IMR-90 (cell line): ENCODE measurements at regions of chr5 and their contacts with region 1.

Region 1: GRCh38 chr5:112737463-112738190 is at the start of gene APC:
- DNase-seq: peak; percentile 87
- ATAC-seq: peak; percentile 95
- H3K4me3 ChIP-seq: peak within 1 kb of the TSS; percentile 97
- H3K27ac ChIP-seq: peak within 1 kb of the TSS; percentile 87
- H3K4me1 ChIP-seq: peaks cover 10% of the 10 kb centered on the region
- H3K27me3 ChIP-seq: no peaks in the 10 kb centered on the region
- CTCF ChIP-seq: no peak
- POLR2A ChIP-seq: 0 out of 2 replicates have a peak, but pooled peaks have one; percentile 22
- RAD21 ChIP-seq: no peak
- total RNA-seq, gene APC: 58.4 and 76.1 TPM in 2 replicates

Region 2: GRCh38 chr5:112707187-112708102 is 30.2 kb before region 1 on chr5:
- CTCF ChIA-PET with region 1: no interaction called
- POLR2A ChIA-PET with region 1: no interaction called
- dilution Hi-C with region 1: no loop called
- in situ Hi-C with region 1: no loop called
- intact Hi-C with region 1: loop called (anchors 5 kb)
- DNase-seq: peak; percentile 98
- ATAC-seq: peak; percentile 96
- H3K4me3 ChIP-seq: peak overlapping the region; percentile 87
- H3K27ac ChIP-seq: peak overlapping the region; percentile 94
- H3K4me1 ChIP-seq: peaks cover 4% of the 10 kb centered on the region; the same call in 1 of the 2 replicates
- H3K27me3 ChIP-seq: no peaks in the 10 kb centered on the region
- CTCF ChIP-seq: no peak
- POLR2A ChIP-seq: peak; percentile 67; the same call in 1 of the 2 replicates
- RAD21 ChIP-seq: no peak

Region 3: GRCh38 chr5:112779531-112779930 is 41.9 kb after region 1 on chr5:
- CTCF ChIA-PET with region 1: no interaction called
- POLR2A ChIA-PET with region 1: interaction called, 15 read pairs
- dilution Hi-C with region 1: no loop called
- in situ Hi-C with region 1: no loop called
- intact Hi-C with region 1: no loop called
- DNase-seq: peak; percentile 84
- ATAC-seq: peak; percentile 43
- H3K4me3 ChIP-seq: no peak overlapping the region
- H3K27ac ChIP-seq: no peak overlapping the region
- H3K4me1 ChIP-seq: 0 out of 2 replicates have a peak, but pooled peaks cover 2% of the 10 kb centered on the region
- H3K27me3 ChIP-seq: no peaks in the 10 kb centered on the region
- CTCF ChIP-seq: no peak
- POLR2A ChIP-seq: no peak
- RAD21 ChIP-seq: no peak

Region 4: DNA sequence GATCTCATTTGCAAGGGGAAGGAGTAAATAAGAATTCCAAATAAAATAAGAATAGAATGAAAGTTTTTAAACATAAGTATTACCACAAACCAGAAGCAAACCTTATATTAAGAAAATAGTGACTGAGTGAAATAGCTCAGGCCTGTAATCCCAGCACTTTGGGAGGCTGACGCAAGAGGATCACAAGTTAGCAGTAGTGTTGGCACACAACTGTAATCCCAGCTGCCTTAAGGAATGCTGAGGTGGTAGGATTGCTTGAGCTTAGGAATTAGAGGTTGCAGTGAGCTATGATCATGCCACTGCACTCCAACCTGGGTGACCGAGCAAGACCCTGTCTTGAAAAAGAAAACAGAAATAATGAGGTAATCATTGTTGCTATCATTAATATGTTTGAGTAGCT is 47.1 kb after region 1 on chr5:
- CTCF ChIA-PET with region 1: no interaction called
- POLR2A ChIA-PET with region 1: interaction called, 17 read pairs
- dilution Hi-C with region 1: no loop called
- in situ Hi-C with region 1: no loop called
- intact Hi-C with region 1: no loop called
- DNase-seq: peak; percentile 55
- ATAC-seq: peak; percentile 24; the same call in 1 of the 2 replicates
- H3K4me3 ChIP-seq: no peak overlapping the region
- H3K27ac ChIP-seq: peak overlapping the region; percentile 21; the same call in 1 of the 2 replicates
- H3K4me1 ChIP-seq: peaks cover 4% of the 10 kb centered on the region
- H3K27me3 ChIP-seq: no peaks in the 10 kb centered on the region
- CTCF ChIP-seq: no peak
- POLR2A ChIP-seq: no peak
- RAD21 ChIP-seq: no peak